AG04450 (cell line): ENCODE measurements at regions of chr1 and their contacts with region 1.

Region 1: DNA sequence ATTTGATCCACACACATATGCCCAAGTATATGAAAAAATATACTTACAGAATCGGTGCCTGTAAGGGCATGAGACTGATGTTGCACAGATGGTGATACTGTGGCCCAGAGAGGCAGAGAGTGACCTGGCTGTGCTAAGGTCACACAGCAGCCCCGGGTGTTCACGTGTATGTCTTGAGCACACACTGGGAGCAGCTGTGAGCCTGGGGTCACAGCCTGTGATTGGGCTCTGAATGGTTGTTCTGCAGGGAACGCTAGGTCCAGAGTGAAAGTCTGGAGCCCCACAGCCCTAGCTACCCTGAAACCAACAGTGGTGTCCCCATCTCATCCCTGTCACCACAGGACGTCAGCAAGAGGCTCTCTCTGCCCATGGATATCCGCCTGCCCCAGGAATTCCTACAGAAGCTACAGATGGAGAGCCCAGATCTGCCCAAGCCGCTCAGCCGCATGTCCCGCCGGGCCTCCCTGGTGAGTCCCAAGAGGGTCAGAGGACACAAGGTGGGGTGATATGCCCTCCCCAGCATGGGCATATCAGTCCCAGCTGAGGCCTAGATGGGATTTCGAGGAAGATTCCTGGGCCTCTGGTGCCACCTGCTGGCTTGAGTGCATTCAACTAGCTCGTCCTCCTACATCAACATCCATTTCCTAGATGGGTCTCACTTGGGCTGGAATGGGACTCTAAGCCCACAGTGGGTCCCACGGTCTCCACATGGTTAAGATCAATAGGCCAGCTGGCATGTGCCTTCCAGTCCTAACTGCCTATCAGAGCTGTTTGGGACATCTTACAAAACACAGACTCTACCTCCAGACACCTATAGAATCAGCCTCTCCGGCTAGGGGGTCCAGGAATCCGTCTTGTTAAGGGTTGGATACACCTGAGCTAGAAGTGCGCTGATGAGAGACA is 19.7 kb downstream of the CDK18 start:
- DNase-seq: peak; percentile 33
- H3K4me3 ChIP-seq: no peak overlapping the region
- H3K27ac ChIP-seq: no peak overlapping the region
- H3K27me3 ChIP-seq: peaks cover 33% of the 10 kb centered on the region
- CTCF ChIP-seq: peak; percentile 82

Region 2: DNA sequence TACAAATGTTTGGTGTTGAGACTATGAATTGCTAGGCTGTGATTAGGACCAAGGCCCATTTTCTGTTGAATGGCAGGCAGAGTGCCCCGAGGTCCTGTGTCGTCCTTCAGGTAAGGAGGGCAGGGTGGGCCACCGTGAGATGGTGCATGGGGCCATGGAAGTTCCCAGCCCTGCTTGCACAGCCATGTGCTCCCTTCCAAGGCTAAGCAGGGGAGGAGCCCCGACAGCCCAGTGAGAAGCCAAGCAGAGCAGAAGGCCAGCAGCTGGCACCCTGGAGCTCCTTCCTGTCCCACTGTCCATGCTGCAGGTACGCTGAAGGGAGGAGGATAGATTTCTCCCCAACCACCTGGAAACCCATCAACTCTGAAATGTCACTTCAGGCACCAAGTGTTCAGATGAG is 194.4 kb before region 1 on chr1:
- CTCF ChIA-PET with region 1: interaction called, 51 read pairs
- POLR2A ChIA-PET with region 1: no interaction called
- DNase-seq: no peak
- H3K4me3 ChIP-seq: no peak overlapping the region
- H3K27ac ChIP-seq: no peak overlapping the region
- H3K27me3 ChIP-seq: peaks cover 19% of the 10 kb centered on the region
- CTCF ChIP-seq: no peak

Region 3: GRCh38 chr1:205375835-205376545 is 148.2 kb before region 1 on chr1:
- CTCF ChIA-PET with region 1: interaction called, 11 read pairs
- POLR2A ChIA-PET with region 1: no interaction called
- DNase-seq: no peak
- H3K4me3 ChIP-seq: no peak overlapping the region
- H3K27ac ChIP-seq: no peak overlapping the region
- H3K27me3 ChIP-seq: peaks cover 5% of the 10 kb centered on the region
- CTCF ChIP-seq: 0 out of 2 replicates have a peak, but pooled peaks have one; percentile 12

Region 4: GRCh38 chr1:205500240-205501233 is 23.6 kb before region 1 on chr1:
- CTCF ChIA-PET with region 1: interaction called, 427 read pairs
- POLR2A ChIA-PET with region 1: no interaction called
- DNase-seq: no peak
- H3K4me3 ChIP-seq: no peak overlapping the region
- H3K27ac ChIP-seq: no peak overlapping the region
- H3K27me3 ChIP-seq: peaks cover 53% of the 10 kb centered on the region
- CTCF ChIP-seq: no peak

Region 5: GRCh38 chr1:205536759-205537361 is 12.7 kb after region 1 on chr1:
- CTCF ChIA-PET with region 1: interaction called, 17 read pairs
- POLR2A ChIA-PET with region 1: interaction called, 4 read pairs
- DNase-seq: no peak
- H3K4me3 ChIP-seq: no peak overlapping the region
- H3K27ac ChIP-seq: no peak overlapping the region
- H3K27me3 ChIP-seq: peaks cover 20% of the 10 kb centered on the region
- CTCF ChIP-seq: no peak

Region 6: DNA sequence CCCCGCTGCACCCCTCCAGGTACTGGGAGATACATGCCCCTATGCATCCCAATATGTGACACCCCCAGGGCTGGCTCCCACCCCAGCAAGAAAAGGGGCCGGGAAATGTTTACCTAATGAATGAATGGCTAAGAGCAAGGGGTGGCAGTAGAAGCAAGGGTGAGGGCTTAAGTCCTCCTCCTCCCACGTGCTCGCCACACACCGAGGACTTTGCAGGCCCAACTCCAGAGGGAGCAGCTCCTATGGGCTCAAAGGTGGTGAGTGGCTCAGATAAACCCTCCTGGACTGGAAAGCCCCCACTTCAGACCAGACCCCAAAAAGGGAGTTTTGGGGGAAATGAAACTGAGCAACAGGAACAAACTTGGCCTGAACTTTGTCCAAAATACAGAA is 144.8 kb after region 1 on chr1:
- CTCF ChIA-PET with region 1: no interaction called
- POLR2A ChIA-PET with region 1: no interaction called
- DNase-seq: no peak
- H3K4me3 ChIP-seq: no peak overlapping the region
- H3K27ac ChIP-seq: no peak overlapping the region
- H3K27me3 ChIP-seq: no peaks in the 10 kb centered on the region
- CTCF ChIP-seq: no peak